SK-N-SH (cell line): ENCODE measurements at regions of chr17 and their contacts with region 1.

Region 1: DNA sequence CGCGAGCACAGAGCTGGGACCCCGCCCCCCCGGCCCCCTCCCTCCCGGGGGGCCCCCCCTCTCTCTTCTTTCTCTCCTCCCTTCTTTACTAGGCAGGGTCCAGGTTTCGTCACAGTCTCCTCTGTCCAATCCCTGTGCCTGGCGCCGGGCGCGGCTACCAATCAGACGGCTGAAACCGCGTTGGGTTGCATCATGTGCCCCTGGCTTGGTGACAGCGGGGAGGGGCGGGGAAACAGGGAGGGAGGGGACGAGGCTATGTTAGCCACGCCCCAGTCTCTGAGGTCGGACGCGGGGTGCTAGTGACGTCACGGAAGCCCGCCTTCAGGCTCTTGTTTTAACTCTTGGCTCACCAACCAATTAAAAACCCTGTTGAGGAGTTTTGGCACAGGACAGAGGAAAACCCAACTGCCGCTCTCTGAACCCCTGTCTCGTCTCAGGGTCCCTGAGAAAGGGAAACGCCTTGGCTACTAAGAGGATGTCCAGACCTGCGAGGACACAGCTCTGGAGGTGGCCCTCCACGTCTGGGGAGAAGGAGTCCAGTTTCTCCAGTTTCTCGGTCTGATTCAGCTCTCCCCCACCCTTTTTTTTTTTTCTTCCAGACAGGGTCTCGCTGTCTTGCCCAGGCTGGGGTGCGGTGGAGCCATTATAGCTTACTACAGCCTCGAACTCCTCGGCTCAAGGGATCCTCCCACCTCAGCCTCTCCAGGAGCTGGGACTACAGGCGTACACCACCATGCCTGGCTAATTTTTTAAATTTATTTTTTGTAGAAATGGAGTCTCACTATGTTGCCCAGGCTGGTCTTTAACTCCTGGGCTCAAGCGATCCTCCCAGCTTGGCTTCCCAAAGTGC is 439 bp upstream of the PLEKHH3 start:
- DNase-seq: peak; percentile 97
- H3K4me3 ChIP-seq: peak overlapping the region; percentile 91 to 98
- H3K27ac ChIP-seq: peak overlapping the region; percentile 87 to 99
- H3K4me1 ChIP-seq: peaks cover 15 to 52% of the 10 kb centered on the region in 2 experiments
- H3K27me3 ChIP-seq: no peaks in the 10 kb centered on the region
- CTCF ChIP-seq: no peak
- EP300 ChIP-seq: 0 out of 4 replicates have a peak, but pooled peaks of 1 of the 2 experiments have one; percentile 1
- RAD21 ChIP-seq: no peak

Region 2: GRCh38 chr17:42459256-42459800 is 217.9 kb before region 1 on chr17:
- CTCF ChIA-PET with region 1: no interaction called
- POLR2A ChIA-PET with region 1: no interaction called
- DNase-seq: peak; percentile 56
- H3K4me3 ChIP-seq: peak overlapping the region; percentile 72 to 75
- H3K27ac ChIP-seq: peak overlapping the region; percentile 70 to 76
- H3K4me1 ChIP-seq: peaks cover 6 to 8% of the 10 kb centered on the region in 2 experiments; a peak in 3 of 4 replicates
- H3K27me3 ChIP-seq: no peaks in the 10 kb centered on the region
- CTCF ChIP-seq: peak; percentile 61
- EP300 ChIP-seq: no peak
- RAD21 ChIP-seq: peak; percentile 20; the same call in 1 of the 2 replicates

Region 3: DNA sequence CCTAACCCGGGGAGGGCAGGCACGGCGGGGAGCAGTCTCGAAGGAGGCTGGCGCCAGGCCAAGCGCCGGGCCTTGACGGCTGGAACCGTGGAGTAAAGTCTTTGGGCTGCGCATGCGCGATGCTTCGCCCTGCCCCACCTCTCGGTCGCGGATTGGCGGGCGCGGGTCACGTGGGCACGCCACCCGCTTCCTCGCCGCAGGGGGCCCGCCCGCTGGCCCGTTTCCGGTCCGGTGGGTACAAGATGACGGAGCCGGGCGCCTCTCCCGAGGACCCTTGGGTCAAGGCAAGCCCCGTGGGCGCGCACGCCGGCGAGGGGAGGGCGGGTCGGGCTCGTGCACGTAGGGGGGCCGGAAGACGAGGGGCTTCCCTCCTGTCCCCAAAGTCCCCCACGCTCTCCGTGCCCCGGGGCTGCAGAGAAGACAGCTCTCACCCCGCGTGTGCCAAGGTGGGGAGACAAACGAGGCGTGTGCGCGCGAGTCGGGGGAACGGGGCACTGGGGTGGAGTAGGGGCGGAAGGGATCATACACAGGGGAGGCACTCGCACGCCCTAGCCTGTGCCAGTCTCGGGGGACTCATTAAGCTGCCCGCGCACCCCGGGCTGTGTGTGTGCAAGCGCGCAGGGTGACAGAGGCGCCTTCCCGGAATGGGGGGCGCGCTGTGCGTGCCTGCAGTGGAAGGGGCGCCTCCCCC is 110.2 kb before region 1 on chr17 and contains the start of gene MLX:
- CTCF ChIA-PET with region 1: interaction called, 51 read pairs
- POLR2A ChIA-PET with region 1: no interaction called
- DNase-seq: peak; percentile 100
- H3K4me3 ChIP-seq: peak within 1 kb of the TSS; percentile 76 to 92
- H3K27ac ChIP-seq: peak within 1 kb of the TSS; percentile 58 to 91
- H3K4me1 ChIP-seq: peaks cover 4 to 28% of the 10 kb centered on the region in 2 experiments; a peak in 3 of 4 replicates
- H3K27me3 ChIP-seq: no peaks in the 10 kb centered on the region
- CTCF ChIP-seq: no peak; the same call in 1 of the 2 replicates
- EP300 ChIP-seq: no peak
- RAD21 ChIP-seq: no peak
- polyA plus RNA-seq, gene MLX: 44.5 and 66.4 TPM in 2 replicates

Region 4: DNA sequence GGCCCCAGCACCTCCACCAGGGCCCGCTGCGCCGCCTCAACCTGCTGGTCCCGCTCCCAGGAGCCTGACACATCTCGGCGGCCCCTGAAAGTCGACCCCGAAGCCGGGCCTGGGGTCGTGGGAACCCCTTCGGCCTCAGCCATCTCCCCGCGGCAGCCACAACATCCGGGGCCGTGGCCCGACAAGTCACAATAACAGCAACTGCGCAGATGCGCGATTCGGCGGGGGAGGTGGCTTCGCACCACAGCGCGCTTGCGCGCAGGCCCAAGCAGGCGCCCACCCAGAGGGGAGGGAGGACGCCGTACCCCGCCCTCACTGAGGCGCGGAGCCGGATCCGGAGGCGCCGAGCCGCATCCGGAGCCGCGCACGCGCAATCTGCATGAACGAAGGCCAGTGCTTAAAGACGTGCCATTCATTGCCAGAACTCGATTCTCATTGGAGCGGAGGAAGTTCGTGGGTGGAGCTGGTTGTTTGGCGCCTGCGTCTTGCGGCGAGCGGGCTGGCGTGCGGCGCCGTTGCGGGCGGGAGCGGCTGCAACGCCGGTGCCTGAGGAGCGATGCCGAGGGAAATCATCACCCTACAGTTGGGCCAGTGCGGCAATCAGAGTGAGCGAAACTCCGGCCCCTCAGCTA is 67.9 kb before region 1 on chr17 and contains the starts of genes RETREG3 and TUBG1:
- CTCF ChIA-PET with region 1: interaction called, 48 read pairs
- POLR2A ChIA-PET with region 1: interaction called, 16 read pairs
- DNase-seq: peak; percentile 100
- H3K4me3 ChIP-seq: peak within 1 kb of the TSS; percentile 72 to 99
- H3K27ac ChIP-seq: peak within 1 kb of the TSS; percentile 80 to 91
- H3K4me1 ChIP-seq: peaks cover 0 to 6% of the 10 kb centered on the region in 2 experiments; a peak in 2 of 4 replicates
- H3K27me3 ChIP-seq: no peaks in the 10 kb centered on the region
- CTCF ChIP-seq: peak; percentile 43
- EP300 ChIP-seq: no peak
- RAD21 ChIP-seq: peak; percentile 11; the same call in 1 of the 2 replicates
- polyA plus RNA-seq, gene RETREG3: 13.3 and 24.9 TPM in 2 replicates
- polyA plus RNA-seq, gene TUBG1: 72.4 and 145 TPM in 2 replicates

Region 5: DNA sequence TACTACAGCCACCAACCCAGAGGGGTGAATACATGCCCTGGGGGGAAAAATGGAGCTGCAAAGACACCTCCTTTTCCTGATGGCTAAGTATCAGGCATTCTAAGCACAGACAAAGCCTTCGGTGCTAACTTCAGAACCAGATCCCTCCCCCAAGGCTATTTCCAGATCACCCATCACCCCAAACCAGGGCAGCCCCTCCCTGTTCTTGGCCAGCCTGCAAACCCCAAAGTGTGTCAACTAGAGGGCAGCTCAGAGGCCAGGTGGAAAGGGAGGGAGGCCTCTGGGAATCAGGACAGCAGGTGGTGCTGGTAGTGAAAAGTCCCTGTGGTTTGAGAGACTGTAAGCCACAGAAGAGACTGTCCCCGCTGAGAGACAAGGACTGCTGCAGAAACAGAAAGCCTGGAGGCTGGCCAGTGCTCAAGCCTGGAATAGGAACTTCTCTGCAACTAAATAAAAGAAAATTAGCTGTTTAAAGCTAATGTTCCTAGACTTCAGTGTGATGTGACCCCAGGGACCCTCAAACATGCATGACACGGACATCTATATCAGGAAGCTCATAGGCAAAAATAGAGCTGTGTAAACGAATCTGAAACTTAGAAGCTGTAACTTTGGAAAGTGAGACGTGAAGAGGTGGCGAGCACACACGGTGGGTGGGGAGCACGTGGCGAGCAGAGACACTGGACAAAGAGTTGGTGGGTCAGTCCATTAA is 58.6 kb before region 1 on chr17:
- CTCF ChIA-PET with region 1: interaction called, 14 read pairs
- POLR2A ChIA-PET with region 1: interaction called, 4 read pairs
- DNase-seq: peak; percentile 55
- H3K4me3 ChIP-seq: no peak overlapping the region
- H3K27ac ChIP-seq: peak overlapping the region in 1 of 2 experiments; percentile 71; a peak in 2 of 4 replicates
- H3K4me1 ChIP-seq: peaks cover 0 to 16% of the 10 kb centered on the region in 2 experiments; a peak in 1 of 4 replicates
- H3K27me3 ChIP-seq: no peaks in the 10 kb centered on the region
- CTCF ChIP-seq: no peak
- EP300 ChIP-seq: no peak
- RAD21 ChIP-seq: peak; percentile 61

Region 6: GRCh38 chr17:42653179-42654124 is 23.8 kb before region 1 on chr17:
- CTCF ChIA-PET with region 1: interaction called, 121 read pairs
- POLR2A ChIA-PET with region 1: interaction called, 17 read pairs
- DNase-seq: peak; percentile 83
- H3K4me3 ChIP-seq: peak overlapping the region; percentile 32 to 40
- H3K27ac ChIP-seq: peak overlapping the region; percentile 87 to 93
- H3K4me1 ChIP-seq: peaks cover 0 to 12% of the 10 kb centered on the region in 2 experiments; a peak in 1 of 4 replicates
- H3K27me3 ChIP-seq: no peaks in the 10 kb centered on the region
- CTCF ChIP-seq: no peak
- EP300 ChIP-seq: peak in 1 of 2 experiments; percentile 97; a peak in 3 of 4 replicates
- RAD21 ChIP-seq: 0 out of 2 replicates have a peak, but pooled peaks have one; percentile 25

Region 7: GRCh38 chr17:42659079-42659931 is 17.9 kb before region 1 on chr17 and contains the start of gene TUBG2:
- CTCF ChIA-PET with region 1: interaction called, 121 read pairs
- POLR2A ChIA-PET with region 1: interaction called, 17 read pairs
- DNase-seq: peak; percentile 98
- H3K4me3 ChIP-seq: peak within 1 kb of the TSS; percentile 60 to 72
- H3K27ac ChIP-seq: peak within 1 kb of the TSS; percentile 81 to 87
- H3K4me1 ChIP-seq: peaks cover 12 to 13% of the 10 kb centered on the region in 2 experiments; a peak in 2 of 4 replicates
- H3K27me3 ChIP-seq: no peaks in the 10 kb centered on the region
- CTCF ChIP-seq: no peak
- EP300 ChIP-seq: 0 out of 4 replicates have a peak, but pooled peaks of 1 of the 2 experiments have one; percentile 32
- RAD21 ChIP-seq: 0 out of 2 replicates have a peak, but pooled peaks have one; percentile 27
- polyA plus RNA-seq, gene TUBG2: 27.6 and 33.9 TPM in 2 replicates